WTC11 (cell line): ENCODE measurements at regions of chr16 and their contacts with region 1.

Region 1: DNA sequence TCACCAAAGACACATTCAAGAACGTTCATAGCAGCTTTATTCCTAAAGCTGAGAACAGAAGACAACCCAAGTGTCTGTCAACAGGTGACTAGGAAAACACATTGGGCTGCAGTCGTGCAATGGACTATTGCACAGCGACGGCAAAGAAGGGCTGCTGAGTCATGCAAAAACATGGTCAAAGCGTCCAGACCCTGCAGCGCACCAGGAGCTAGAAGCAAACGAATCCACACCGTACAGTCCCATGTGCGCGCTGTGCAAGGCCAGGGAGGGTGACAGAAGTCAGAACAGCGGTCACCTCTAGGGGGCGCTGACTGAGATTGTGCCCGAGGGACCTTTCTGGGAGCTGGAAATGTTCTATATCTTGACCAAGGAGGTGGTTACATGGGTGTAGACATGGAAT is 266.4 kb downstream of the MAF start:
- DNase-seq: peak; percentile 73
- ATAC-seq: peak; percentile 77
- H3K4me3 Mint-ChIP-seq: no peak overlapping the region
- H3K27ac Mint-ChIP-seq: no peak overlapping the region
- H3K4me1 Mint-ChIP-seq: peaks cover 7% of the 10 kb centered on the region
- H3K27me3 Mint-ChIP-seq: no peaks in the 10 kb centered on the region; the same call in 1 of the 2 replicates
- CTCF ChIP-seq: peak; percentile 77

Region 2: GRCh38 chr16:79050053-79050452 is 284.1 kb before region 1 on chr16:
- CTCF ChIA-PET with region 1: no interaction called
- POLR2A ChIA-PET with region 1: no interaction called
- DNase-seq: no peak
- ATAC-seq: no peak
- H3K4me3 Mint-ChIP-seq: no peak overlapping the region
- H3K27ac Mint-ChIP-seq: no peak overlapping the region
- H3K4me1 Mint-ChIP-seq: peaks cover 64% of the 10 kb centered on the region
- H3K27me3 Mint-ChIP-seq: peaks cover 12% of the 10 kb centered on the region
- CTCF ChIP-seq: no peak

Region 3: DNA sequence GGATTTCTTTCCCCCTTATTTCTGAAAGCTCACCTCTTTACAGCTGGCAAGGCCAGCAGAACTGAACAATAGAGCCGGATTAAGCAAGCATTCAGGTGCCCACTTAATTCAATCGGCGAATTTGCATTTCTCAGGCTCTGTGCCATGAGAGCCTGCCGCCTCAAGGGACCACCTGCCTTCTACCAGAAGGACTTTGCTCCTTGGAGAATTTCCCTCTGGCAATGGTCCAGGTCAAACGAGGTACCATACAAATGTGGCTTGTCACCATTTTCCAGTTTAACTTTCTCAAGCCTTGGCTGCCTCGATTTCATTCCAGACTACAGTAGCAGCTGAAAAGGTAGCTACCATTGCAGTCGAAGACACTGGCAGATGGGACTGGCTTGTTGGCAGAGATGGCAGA is 267.6 kb before region 1 on chr16:
- CTCF ChIA-PET with region 1: no interaction called
- POLR2A ChIA-PET with region 1: no interaction called
- DNase-seq: no peak
- ATAC-seq: peak; percentile 50; the same call in 1 of the 2 replicates
- H3K4me3 Mint-ChIP-seq: no peak overlapping the region
- H3K27ac Mint-ChIP-seq: no peak overlapping the region
- H3K4me1 Mint-ChIP-seq: peaks cover 28% of the 10 kb centered on the region
- H3K27me3 Mint-ChIP-seq: no peaks in the 10 kb centered on the region; the same call in 1 of the 2 replicates
- CTCF ChIP-seq: no peak

Region 4: GRCh38 chr16:79310710-79311109 is 23.4 kb before region 1 on chr16:
- CTCF ChIA-PET with region 1: interaction called, 11 read pairs
- POLR2A ChIA-PET with region 1: no interaction called
- DNase-seq: no peak
- ATAC-seq: peak; percentile 40; the same call in 1 of the 2 replicates
- H3K4me3 Mint-ChIP-seq: no peak overlapping the region
- H3K27ac Mint-ChIP-seq: no peak overlapping the region
- H3K4me1 Mint-ChIP-seq: peaks cover 44% of the 10 kb centered on the region
- H3K27me3 Mint-ChIP-seq: peaks cover 3% of the 10 kb centered on the region; the same call in 1 of the 2 replicates
- CTCF ChIP-seq: no peak

Region 5: DNA sequence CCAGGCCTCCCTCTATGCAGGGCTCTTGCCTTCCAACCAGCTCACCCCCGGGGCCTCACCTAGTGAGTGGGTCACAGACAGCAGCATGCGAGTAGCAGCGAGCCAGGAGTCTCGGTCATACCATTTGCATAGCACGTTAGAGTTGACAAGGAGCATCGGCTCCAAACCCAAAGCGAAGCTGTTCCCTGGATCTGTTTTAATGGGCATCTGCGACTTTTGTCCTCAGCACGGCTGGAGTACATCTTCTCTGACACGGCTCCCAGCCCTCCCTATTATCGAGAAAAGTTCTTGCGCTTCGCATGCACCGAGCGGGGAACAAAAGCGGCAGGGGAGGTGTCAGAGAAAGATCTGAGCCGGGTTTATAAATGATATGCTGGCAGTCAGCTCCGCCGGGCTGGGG is 13.2 kb after region 1 on chr16:
- CTCF ChIA-PET with region 1: interaction called, 17 read pairs
- POLR2A ChIA-PET with region 1: interaction called, 3 read pairs
- DNase-seq: peak; percentile 36
- ATAC-seq: peak; percentile 72
- H3K4me3 Mint-ChIP-seq: no peak overlapping the region
- H3K27ac Mint-ChIP-seq: peak overlapping the region; percentile 48; the same call in 1 of the 2 replicates
- H3K4me1 Mint-ChIP-seq: peaks cover 48% of the 10 kb centered on the region
- H3K27me3 Mint-ChIP-seq: no peaks in the 10 kb centered on the region
- CTCF ChIP-seq: no peak

Region 6: GRCh38 chr16:79723583-79724168 is 389.5 kb after region 1 on chr16:
- CTCF ChIA-PET with region 1: no interaction called
- POLR2A ChIA-PET with region 1: no interaction called
- DNase-seq: peak; percentile 11
- ATAC-seq: peak; percentile 74
- H3K4me3 Mint-ChIP-seq: no peak overlapping the region
- H3K27ac Mint-ChIP-seq: no peak overlapping the region
- H3K4me1 Mint-ChIP-seq: peaks cover 7% of the 10 kb centered on the region
- H3K27me3 Mint-ChIP-seq: no peaks in the 10 kb centered on the region
- CTCF ChIP-seq: no peak